B cell (primary cell): ENCODE measurements at regions of chr2 and their contacts with region 1.

Region 1: DNA sequence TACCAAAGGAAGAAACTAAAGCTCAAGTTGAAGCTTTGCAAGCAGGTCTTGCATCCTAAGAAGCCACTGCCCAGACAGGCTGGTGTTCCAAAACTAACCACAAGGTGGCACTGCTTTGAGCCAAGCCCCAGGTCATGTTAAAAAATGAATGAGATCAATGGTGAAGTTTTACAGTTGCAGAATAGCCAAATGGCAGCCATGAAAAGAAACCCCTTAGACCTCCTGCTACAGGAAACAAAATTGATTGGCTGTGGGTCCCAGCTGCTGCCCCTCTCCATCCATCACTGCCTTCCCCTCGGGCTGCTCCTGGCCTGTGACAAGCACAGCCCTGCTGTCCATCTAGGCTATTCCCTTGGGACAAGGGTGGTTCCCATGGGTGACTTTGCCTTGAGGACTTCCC is 20.7 kb upstream of the MREG start:
- DNase-seq: peak; percentile 81
- ATAC-seq: peak; percentile 85
- H3K4me3 ChIP-seq: no peak overlapping the region
- H3K4me3 Mint-ChIP-seq: no peak overlapping the region
- H3K27ac ChIP-seq: no peak overlapping the region
- H3K27ac Mint-ChIP-seq: no peak overlapping the region
- H3K4me1 ChIP-seq: peaks cover 0 to 5% of the 10 kb centered on the region in 2 donors
- H3K4me1 Mint-ChIP-seq: peaks cover 8% of the 10 kb centered on the region
- H3K27me3 ChIP-seq: no peaks in the 10 kb centered on the region
- H3K27me3 Mint-ChIP-seq: no peaks in the 10 kb centered on the region
- CTCF ChIP-seq: peak; percentile 93

Region 2: GRCh38 chr2:215609089-215610032 is 424.7 kb before region 1 on chr2:
- CTCF ChIA-PET with region 1: no interaction called
- POLR2A ChIA-PET with region 1: no interaction called
- intact Hi-C with region 1: no loop called
- DNase-seq: no peak
- ATAC-seq: no peak
- H3K4me3 ChIP-seq: no peak overlapping the region
- H3K4me3 Mint-ChIP-seq: no peak overlapping the region
- H3K27ac ChIP-seq: no peak overlapping the region
- H3K27ac Mint-ChIP-seq: no peak overlapping the region
- H3K4me1 ChIP-seq: no peaks in the 10 kb centered on the region
- H3K4me1 Mint-ChIP-seq: no peaks in the 10 kb centered on the region
- H3K27me3 ChIP-seq: no peaks in the 10 kb centered on the region
- H3K27me3 Mint-ChIP-seq: peaks cover 9% of the 10 kb centered on the region
- CTCF ChIP-seq: no peak

Region 3: GRCh38 chr2:216023055-216023648 is 10.9 kb before region 1 on chr2:
- CTCF ChIA-PET with region 1: interaction called, 41 read pairs
- POLR2A ChIA-PET with region 1: no interaction called
- intact Hi-C with region 1: no loop called
- DNase-seq: peak; percentile 56
- ATAC-seq: peak; percentile 64
- H3K4me3 ChIP-seq: no peak overlapping the region
- H3K4me3 Mint-ChIP-seq: no peak overlapping the region
- H3K27ac ChIP-seq: no peak overlapping the region
- H3K27ac Mint-ChIP-seq: no peak overlapping the region
- H3K4me1 ChIP-seq: no peaks in the 10 kb centered on the region
- H3K4me1 Mint-ChIP-seq: no peaks in the 10 kb centered on the region
- H3K27me3 ChIP-seq: no peaks in the 10 kb centered on the region
- H3K27me3 Mint-ChIP-seq: no peaks in the 10 kb centered on the region
- CTCF ChIP-seq: peak; percentile 75

Region 4: DNA sequence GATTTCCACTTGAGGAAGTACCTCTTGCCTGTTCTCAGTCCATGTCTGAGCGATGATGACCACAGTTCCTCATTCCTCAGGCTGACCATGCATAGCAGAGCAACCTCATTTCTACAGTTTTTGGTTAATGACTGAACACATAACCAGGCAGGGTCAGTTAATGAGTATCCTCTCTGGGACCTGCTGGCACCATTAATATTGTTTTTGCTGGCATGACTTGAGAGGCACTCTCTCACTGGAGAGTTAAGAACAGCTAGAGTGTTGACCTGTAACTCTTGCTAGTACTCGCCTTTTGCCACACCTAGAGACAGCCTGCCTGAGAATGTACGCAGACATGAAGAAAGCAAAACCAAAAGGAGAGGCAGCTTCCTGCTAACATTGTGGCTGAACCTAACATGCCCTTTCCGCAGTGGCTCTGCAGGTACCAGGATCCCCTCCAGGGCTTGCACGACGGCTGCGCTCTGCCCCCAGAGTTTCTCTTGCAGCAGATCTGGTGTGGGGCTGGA is 23.7 kb after region 1 on chr2:
- CTCF ChIA-PET with region 1: interaction called, 14 read pairs
- POLR2A ChIA-PET with region 1: no interaction called
- intact Hi-C with region 1: loop called (anchors 1 kb)
- DNase-seq: peak; percentile 79
- ATAC-seq: peak; percentile 92
- H3K4me3 ChIP-seq: peak overlapping the region; percentile 13 to 58 (median 50)
- H3K4me3 Mint-ChIP-seq: peak overlapping the region; percentile 84
- H3K27ac ChIP-seq: peak overlapping the region; percentile 93 to 95
- H3K27ac Mint-ChIP-seq: peak overlapping the region; percentile 98
- H3K4me1 ChIP-seq: peaks cover 17 to 19% of the 10 kb centered on the region in 2 donors
- H3K4me1 Mint-ChIP-seq: peaks cover 34% of the 10 kb centered on the region
- H3K27me3 ChIP-seq: no peaks in the 10 kb centered on the region
- H3K27me3 Mint-ChIP-seq: no peaks in the 10 kb centered on the region
- CTCF ChIP-seq: no peak

Region 5: GRCh38 chr2:216108967-216109921 is 75.2 kb after region 1 on chr2 and contains the start of gene XRCC5:
- CTCF ChIA-PET with region 1: interaction called, 21 read pairs
- POLR2A ChIA-PET with region 1: no interaction called
- intact Hi-C with region 1: no loop called
- DNase-seq: peak; percentile 99
- ATAC-seq: peak; percentile 91
- H3K4me3 ChIP-seq: peak within 1 kb of the TSS; percentile 71 to 96 (median 95)
- H3K4me3 Mint-ChIP-seq: peak within 1 kb of the TSS; percentile 100
- H3K27ac ChIP-seq: peak within 1 kb of the TSS; percentile 91 to 97
- H3K27ac Mint-ChIP-seq: peak within 1 kb of the TSS; percentile 100
- H3K4me1 ChIP-seq: peaks cover 26 to 31% of the 10 kb centered on the region in 2 donors
- H3K4me1 Mint-ChIP-seq: peaks cover 51% of the 10 kb centered on the region
- H3K27me3 ChIP-seq: no peaks in the 10 kb centered on the region
- H3K27me3 Mint-ChIP-seq: peaks cover 3% of the 10 kb centered on the region
- CTCF ChIP-seq: no peak
- total RNA-seq, gene XRCC5: 198 and 216 TPM in 2 replicates

Region 6: GRCh38 chr2:216139884-216140283 is 105.8 kb after region 1 on chr2:
- CTCF ChIA-PET with region 1: interaction called, 9 read pairs
- POLR2A ChIA-PET with region 1: no interaction called
- intact Hi-C with region 1: loop called (anchors 1 kb)
- DNase-seq: peak; percentile 45
- ATAC-seq: peak; percentile 28
- H3K4me3 ChIP-seq: no peak overlapping the region
- H3K4me3 Mint-ChIP-seq: no peak overlapping the region
- H3K27ac ChIP-seq: no peak overlapping the region
- H3K27ac Mint-ChIP-seq: no peak overlapping the region
- H3K4me1 ChIP-seq: no peaks in the 10 kb centered on the region
- H3K4me1 Mint-ChIP-seq: no peaks in the 10 kb centered on the region
- H3K27me3 ChIP-seq: no peaks in the 10 kb centered on the region
- H3K27me3 Mint-ChIP-seq: no peaks in the 10 kb centered on the region
- CTCF ChIP-seq: peak; percentile 60

Region 7: DNA sequence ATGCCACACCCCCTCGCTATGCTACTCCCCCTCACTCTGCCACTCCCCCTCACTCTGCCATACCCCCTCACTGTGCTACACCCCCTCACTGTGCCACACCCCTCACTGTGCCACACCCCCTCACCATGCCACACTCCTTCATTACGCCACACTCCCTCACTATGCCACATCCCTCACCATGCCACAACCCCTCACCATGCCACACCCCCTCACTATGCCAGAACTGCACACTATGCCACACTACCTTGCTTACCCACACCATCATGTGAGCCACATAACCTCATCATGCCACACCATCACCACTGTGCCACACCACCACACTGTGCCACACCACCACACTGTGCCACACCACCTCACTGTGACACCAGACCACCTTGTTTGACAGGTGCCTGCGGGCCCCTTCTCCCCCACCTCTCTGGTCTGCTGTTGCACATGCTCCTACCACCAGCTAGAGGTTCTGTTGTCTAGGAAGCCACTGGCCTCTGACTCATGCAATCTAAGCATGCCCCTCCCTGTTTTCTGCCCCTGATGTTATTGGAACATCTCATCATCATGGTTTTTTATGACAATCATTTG is 316.2 kb after region 1 on chr2:
- CTCF ChIA-PET with region 1: no interaction called
- POLR2A ChIA-PET with region 1: no interaction called
- intact Hi-C with region 1: no loop called
- DNase-seq: no peak
- ATAC-seq: no peak
- H3K4me3 ChIP-seq: no peak overlapping the region
- H3K4me3 Mint-ChIP-seq: no peak overlapping the region
- H3K27ac ChIP-seq: no peak overlapping the region
- H3K27ac Mint-ChIP-seq: no peak overlapping the region
- H3K4me1 ChIP-seq: no peaks in the 10 kb centered on the region
- H3K4me1 Mint-ChIP-seq: no peaks in the 10 kb centered on the region
- H3K27me3 ChIP-seq: no peaks in the 10 kb centered on the region
- H3K27me3 Mint-ChIP-seq: peaks cover 11% of the 10 kb centered on the region
- CTCF ChIP-seq: no peak

Region 8: GRCh38 chr2:217713395-217714286 is 1679.6 kb after region 1 on chr2:
- CTCF ChIA-PET with region 1: interaction called, 4 read pairs
- POLR2A ChIA-PET with region 1: no interaction called
- intact Hi-C with region 1: loop called (anchors 10 kb)
- DNase-seq: peak; percentile 53
- ATAC-seq: peak; percentile 56
- H3K4me3 ChIP-seq: no peak overlapping the region
- H3K4me3 Mint-ChIP-seq: no peak overlapping the region
- H3K27ac ChIP-seq: no peak overlapping the region
- H3K27ac Mint-ChIP-seq: no peak overlapping the region
- H3K4me1 ChIP-seq: no peaks in the 10 kb centered on the region
- H3K4me1 Mint-ChIP-seq: no peaks in the 10 kb centered on the region
- H3K27me3 ChIP-seq: peaks cover 0 to 16% (median 7%) of the 10 kb centered on the region in 4 experiments
- H3K27me3 Mint-ChIP-seq: peaks cover 38% of the 10 kb centered on the region
- CTCF ChIP-seq: peak; percentile 88